MCF 10A (cell line): ENCODE measurements at regions of chr3 and their contacts with region 1.

Region 1: DNA sequence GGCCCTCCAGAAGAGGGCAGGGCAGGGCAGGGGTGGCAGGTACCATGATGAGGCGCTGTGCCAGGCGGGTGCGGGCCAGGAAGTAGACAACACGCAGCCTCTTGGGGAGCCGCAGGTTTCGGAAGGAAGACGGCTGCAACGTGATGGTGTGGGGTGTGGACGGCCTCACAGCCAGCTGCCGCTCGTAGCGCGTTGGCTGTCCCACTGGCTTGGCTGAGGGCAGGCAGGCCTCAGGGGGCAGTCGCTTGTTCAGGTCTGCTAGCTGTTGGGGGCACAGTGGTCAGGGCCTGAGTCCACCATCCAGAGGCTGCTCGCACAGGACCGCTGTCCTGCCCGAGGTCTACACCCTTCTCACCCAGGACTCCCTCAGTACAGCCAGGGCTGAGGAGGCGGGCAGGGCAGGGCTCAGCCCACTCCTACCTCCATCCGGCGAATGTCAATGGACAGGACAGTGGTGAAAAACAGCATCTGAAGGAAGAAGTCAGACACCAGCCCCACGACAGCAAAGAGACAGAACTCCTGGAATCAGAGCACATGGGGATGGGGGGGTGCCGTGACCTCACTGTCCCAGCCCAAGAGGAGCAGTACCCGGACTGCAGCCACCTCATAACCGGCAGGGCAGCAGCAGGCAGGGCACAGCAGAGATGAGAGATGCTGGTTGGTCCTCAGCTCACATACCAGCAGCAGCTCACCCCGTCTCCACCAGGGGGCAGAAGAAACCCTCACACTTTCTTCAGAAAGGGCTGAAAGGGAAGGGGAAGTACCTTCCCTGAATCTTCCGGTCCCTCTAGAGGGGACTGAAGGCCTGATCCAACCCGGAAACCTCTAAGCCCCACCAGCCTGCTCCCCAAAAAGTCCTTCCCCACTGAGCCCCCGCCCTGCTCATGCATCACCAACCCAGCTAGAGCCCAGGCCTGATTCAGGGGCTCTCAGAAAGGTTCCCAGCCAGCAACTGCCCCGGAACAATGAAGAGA is 40.0 kb downstream of the PTPN23 start:
- DNase-seq: peak; percentile 91
- H3K4me3 Mint-ChIP-seq: no peak overlapping the region
- H3K27ac Mint-ChIP-seq: no peak overlapping the region
- H3K4me1 Mint-ChIP-seq: no peaks in the 10 kb centered on the region
- H3K27me3 Mint-ChIP-seq: no peaks in the 10 kb centered on the region
- CTCF ChIP-seq: peak; percentile 88

Region 2: DNA sequence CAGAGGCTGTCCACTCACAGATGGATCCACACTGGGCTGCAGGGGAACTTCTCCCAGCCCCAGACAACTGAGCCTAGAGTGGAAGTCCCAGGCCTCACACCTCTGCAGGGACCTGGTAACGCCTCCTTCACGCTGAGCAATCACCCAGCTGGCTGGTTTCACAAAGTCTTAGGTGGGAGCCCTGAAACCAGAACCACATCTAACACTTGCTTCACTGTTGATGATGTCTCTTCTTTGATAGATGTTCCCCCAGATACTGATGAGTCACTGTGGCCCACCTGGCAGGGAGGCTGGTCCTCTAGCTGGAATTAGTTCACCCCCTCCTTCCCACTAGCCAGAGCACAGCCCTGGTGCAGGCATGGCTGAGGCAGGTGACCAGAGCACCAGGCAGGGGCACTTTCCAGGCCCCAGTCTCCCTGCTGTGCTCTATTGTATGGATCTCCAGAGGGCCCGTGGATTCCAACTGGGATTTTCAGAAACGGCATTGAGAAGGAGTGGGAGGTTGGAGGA is 591.0 kb before region 1 on chr3:
- CTCF ChIA-PET with region 1: no interaction called
- POLR2A ChIA-PET with region 1: no interaction called
- intact Hi-C with region 1: no loop called
- DNase-seq: no peak
- H3K4me3 Mint-ChIP-seq: no peak overlapping the region
- H3K27ac Mint-ChIP-seq: no peak overlapping the region
- H3K4me1 Mint-ChIP-seq: no peaks in the 10 kb centered on the region
- H3K27me3 Mint-ChIP-seq: no peaks in the 10 kb centered on the region
- CTCF ChIP-seq: no peak

Region 3: GRCh38 chr3:47337656-47338055 is 83.1 kb before region 1 on chr3:
- CTCF ChIA-PET with region 1: no interaction called
- POLR2A ChIA-PET with region 1: no interaction called
- intact Hi-C with region 1: no loop called
- DNase-seq: no peak
- H3K4me3 Mint-ChIP-seq: no peak overlapping the region
- H3K27ac Mint-ChIP-seq: no peak overlapping the region
- H3K4me1 Mint-ChIP-seq: no peaks in the 10 kb centered on the region
- H3K27me3 Mint-ChIP-seq: no peaks in the 10 kb centered on the region
- CTCF ChIP-seq: no peak

Region 4: DNA sequence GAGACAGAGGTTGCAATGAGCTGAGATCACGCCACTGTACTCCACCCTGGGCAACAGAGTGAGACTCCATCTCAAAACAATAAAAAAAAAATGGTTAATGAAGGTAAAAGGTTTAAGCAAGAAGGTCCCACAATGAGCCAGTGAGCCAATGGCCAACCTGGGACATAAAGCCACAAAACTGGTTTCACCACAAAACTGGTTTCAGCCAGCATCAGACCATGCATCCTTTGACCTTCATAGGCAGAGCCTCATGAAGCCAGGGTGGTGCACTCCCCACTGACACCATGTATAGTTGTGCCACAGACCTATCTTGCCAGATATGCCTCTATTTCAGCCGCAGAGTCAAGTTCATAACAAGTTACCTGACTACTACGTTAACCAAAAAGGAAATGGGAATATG is 13.0 kb after region 1 on chr3:
- CTCF ChIA-PET with region 1: interaction called, 21 read pairs
- POLR2A ChIA-PET with region 1: interaction called, 4 read pairs
- intact Hi-C with region 1: no loop called
- DNase-seq: no peak
- H3K4me3 Mint-ChIP-seq: no peak overlapping the region
- H3K27ac Mint-ChIP-seq: no peak overlapping the region
- H3K4me1 Mint-ChIP-seq: no peaks in the 10 kb centered on the region
- H3K27me3 Mint-ChIP-seq: no peaks in the 10 kb centered on the region
- CTCF ChIP-seq: no peak

Region 5: DNA sequence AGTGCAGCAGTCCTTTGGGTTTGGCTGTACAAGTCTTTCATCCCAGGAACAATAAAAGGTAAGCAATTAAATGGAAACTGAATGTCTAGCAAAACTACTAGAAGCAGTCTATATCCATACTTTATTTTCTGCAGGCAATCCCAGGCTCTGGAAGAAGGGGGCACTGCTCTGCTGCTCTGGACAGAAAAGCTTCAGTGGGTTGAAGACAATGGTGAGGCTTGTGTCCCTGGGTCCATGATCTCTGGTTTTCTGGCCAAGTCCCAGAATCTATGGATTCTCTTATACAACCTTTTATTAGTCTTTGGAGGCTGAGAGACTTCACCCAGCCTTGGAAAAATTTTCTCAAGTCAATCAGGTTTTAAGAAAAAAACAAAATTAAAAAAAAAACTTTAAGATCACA is 19.3 kb after region 1 on chr3:
- CTCF ChIA-PET with region 1: interaction called, 21 read pairs
- POLR2A ChIA-PET with region 1: interaction called, 5 read pairs
- intact Hi-C with region 1: no loop called
- DNase-seq: peak; percentile 30
- H3K4me3 Mint-ChIP-seq: no peak overlapping the region
- H3K27ac Mint-ChIP-seq: no peak overlapping the region
- H3K4me1 Mint-ChIP-seq: peaks cover 21% of the 10 kb centered on the region
- H3K27me3 Mint-ChIP-seq: no peaks in the 10 kb centered on the region
- CTCF ChIP-seq: no peak

Region 6: DNA sequence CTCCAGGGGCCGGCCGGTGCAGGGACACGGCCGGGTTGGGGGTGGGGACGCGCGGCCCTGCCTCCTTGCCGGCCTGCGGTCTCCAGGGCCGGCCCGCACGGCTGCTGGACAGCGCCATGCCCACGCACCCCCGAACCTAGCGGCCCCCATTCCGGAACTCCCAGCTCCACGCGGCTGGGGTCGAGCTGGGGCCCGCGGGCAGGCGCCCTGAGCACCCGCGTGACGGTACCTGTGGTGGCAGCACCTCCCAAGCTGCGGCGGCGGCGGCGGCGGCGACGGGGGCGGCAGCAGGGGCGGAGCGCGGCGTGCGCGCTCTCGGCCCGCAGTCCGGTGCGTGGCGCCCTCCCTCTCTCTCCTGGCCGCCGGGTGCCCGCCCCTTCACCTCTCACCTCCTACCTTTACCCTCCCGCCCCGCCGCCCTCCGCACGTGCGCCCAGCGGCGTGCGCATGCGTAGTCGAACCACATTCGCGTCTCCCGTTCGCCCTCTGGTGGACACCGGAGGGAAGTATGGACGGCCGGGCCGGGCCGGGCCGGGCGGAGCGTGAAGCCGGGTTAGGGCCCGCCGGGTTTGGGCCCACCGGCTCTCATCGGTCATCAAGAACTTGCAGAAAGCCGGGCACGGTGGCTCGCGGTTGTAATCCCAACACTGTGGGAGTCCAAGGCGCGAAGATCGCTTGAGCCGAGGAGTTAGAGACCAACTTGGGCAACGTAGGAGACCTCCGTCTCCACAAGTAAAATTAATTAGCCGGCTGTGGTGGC is 55.0 kb after region 1 on chr3 and contains the start of gene SCAP:
- CTCF ChIA-PET with region 1: interaction called, 86 read pairs
- POLR2A ChIA-PET with region 1: interaction called, 34 read pairs
- intact Hi-C with region 1: loop called (anchors 1 kb)
- DNase-seq: peak; percentile 89
- H3K4me3 Mint-ChIP-seq: peak within 1 kb of the TSS; percentile 99
- H3K27ac Mint-ChIP-seq: peak within 1 kb of the TSS; percentile 86
- H3K4me1 Mint-ChIP-seq: peaks cover 23% of the 10 kb centered on the region
- H3K27me3 Mint-ChIP-seq: no peaks in the 10 kb centered on the region
- CTCF ChIP-seq: peak; percentile 87
- total RNA-seq, gene SCAP: 84.3 and 87.8 TPM in 2 replicates

Region 7: DNA sequence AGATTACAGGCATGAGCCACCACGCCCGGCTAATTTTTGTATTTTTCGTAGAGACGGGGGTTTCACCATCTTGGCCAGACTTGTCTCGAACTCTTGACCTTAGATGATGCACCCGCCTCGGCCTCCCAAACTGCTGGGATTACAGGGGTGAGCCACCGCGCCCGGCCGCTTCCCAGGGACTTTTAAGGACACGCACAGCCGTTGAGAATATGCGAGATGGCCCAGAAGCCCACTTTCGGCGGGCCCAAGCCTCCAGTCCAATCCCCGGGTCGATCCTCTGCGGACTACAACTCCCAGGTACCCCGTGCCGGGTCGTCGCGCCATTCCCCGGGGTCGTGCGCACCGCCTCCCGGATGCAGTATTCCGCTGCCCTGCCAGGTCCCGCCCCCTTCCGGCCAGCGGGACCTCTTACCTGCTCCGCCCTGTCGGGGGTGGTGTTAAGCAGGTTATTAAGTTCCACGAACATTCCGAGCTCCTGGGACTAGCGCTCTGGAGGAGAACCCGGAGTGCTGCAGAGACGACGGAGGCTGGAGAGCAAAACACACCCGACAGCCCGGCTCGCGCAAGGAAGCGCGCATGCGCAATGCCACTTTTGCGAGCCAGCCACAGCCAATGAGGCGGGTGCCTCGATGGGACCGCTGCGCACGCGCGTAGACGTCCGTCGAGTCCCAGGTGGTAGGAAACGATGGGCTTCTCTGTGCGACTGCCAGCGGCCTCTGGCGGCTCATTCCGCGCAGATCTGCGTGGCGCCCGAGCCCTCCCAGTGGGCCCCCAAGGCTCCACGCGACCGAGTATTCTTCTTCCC is 92.5 kb after region 1 on chr3 and contains the start of gene ELP6:
- CTCF ChIA-PET with region 1: interaction called, 4 read pairs
- POLR2A ChIA-PET with region 1: no interaction called
- intact Hi-C with region 1: loop called (anchors 1 kb)
- DNase-seq: peak; percentile 94
- H3K4me3 Mint-ChIP-seq: peak within 1 kb of the TSS; percentile 93
- H3K27ac Mint-ChIP-seq: peak within 1 kb of the TSS; percentile 77
- H3K4me1 Mint-ChIP-seq: no peaks in the 10 kb centered on the region
- H3K27me3 Mint-ChIP-seq: no peaks in the 10 kb centered on the region
- CTCF ChIP-seq: peak; percentile 9
- total RNA-seq, gene ELP6: 32.5 and 33.5 TPM in 2 replicates

Region 8: DNA sequence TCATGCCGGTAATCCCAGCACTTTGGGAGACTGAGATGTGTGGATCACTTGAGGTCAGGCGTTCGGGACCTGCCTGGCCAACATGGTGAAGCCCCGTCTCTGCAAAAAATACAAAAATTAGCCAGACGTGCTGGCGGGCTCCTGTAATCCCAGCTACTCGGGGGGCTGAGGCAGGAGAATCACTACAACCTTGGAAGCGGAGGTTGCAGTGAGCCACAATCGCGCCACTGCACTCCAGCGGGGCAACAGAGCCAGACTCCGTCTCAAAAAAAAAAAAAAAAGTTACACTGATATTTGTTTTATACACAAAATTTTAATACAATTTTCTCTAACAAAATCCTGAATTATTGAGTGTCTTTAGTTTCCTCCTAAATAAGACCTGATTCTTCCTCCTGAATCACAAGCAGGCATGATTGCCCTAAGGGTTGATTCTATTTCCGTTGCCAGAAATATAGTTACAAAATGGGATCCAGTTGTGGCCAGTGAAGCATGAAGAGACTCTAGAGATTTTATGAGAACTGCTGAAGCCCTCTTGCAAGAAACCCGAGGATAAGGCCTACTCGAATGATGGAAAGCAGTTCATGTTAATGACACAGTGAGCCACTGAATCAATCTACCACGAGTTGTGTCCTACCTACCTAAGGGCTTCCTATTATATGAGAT is 370.5 kb after region 1 on chr3:
- CTCF ChIA-PET with region 1: interaction called, 3 read pairs
- POLR2A ChIA-PET with region 1: no interaction called
- intact Hi-C with region 1: loop called (anchors 1 kb)
- DNase-seq: no peak
- H3K4me3 Mint-ChIP-seq: no peak overlapping the region
- H3K27ac Mint-ChIP-seq: no peak overlapping the region
- H3K4me1 Mint-ChIP-seq: no peaks in the 10 kb centered on the region
- H3K27me3 Mint-ChIP-seq: no peaks in the 10 kb centered on the region
- CTCF ChIP-seq: no peak